ENCODE measurements at regions of chr2 and their contacts with region 1.

Region 1: DNA sequence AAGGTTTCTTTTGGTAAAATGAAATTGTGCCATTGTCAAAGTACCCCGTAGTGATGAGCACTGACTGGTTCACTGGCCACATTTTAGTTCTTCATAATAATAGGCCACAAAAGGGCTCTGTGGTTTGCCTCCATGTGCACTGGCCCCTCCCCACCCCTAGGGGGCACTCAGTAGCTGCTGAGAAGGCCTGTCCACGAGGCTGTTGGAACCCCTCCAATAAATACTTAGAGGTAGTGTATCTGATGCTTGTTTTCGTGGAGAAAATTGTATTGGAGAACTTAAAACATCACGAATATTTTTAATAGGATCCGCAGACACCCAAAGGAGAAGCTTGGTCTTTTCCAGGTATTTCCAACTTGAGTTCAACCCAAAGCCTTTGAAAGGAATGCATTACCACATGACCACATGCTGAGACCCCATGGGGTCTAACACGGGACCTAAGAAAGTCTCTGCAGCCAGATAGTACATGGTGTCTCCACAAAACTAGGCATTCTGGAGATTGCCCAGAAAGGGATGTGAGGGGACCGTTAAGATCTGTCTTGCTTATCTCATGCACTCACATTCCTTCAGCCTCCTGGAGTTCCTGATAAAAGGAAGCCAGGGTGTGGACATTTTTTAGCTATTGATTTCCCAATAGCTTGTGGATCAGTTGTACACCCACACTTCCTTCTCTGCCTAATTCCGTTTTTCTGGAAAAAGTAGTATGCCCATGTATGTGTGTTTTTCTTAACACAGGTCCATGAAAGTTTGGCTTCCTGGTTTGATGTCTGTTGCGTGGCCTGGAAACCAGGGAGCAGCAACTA is 28.5 kb upstream of the NOSTRIN start:
- DNase-seq: peak; percentile 76 to 88 (median 80)
- H3K4me3 ChIP-seq: no peak overlapping the region
- H3K27ac ChIP-seq: peak overlapping the region in 1 of 5 donors; percentile 37
- H3K4me1 ChIP-seq: peaks cover 0 to 6% of the 10 kb centered on the region in 2 donors
- H3K27me3 ChIP-seq: no peaks in the 10 kb centered on the region
- CTCF ChIP-seq: peak; percentile 86 to 93 (median 90)
- POLR2A ChIP-seq: no peak

Region 2: DNA sequence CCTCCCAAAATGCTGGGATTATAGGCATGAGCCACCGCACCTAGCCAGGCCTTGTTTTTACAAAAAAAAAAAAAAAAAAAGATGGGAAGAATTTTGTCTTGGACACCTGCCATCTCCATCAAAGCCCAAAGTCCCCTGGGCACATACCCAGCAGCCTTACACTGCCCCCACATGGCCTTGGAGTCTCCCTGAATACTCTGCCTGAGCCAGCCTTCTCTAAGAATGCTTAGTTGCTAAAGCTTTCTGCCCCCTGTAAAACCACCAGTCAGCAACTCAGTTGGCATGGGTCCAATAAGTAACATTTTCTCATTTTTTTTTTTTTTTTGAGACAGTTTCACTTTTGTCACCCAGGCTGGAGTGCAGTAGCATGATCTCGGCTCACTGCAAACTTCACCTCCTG is 75.7 kb after region 1 on chr2:
- intact Hi-C with region 1: loop called (anchors 10 kb)
- DNase-seq: peak; percentile 52 to 86 (median 83)
- H3K4me3 ChIP-seq: no peak overlapping the region
- H3K27ac ChIP-seq: peak overlapping the region in 1 of 5 donors; percentile 27
- H3K4me1 ChIP-seq: peaks cover 4 to 7% of the 10 kb centered on the region in 2 donors
- H3K27me3 ChIP-seq: no peaks in the 10 kb centered on the region
- CTCF ChIP-seq: peak in 5 of 6 experiments; percentile 27 to 48 (median 40)
- POLR2A ChIP-seq: no peak

Region 3: GRCh38 chr2:168920504-168921157 is 146.7 kb after region 1 on chr2:
- intact Hi-C with region 1: loop called (anchors 5 kb)
- DNase-seq: no peak
- H3K4me3 ChIP-seq: no peak overlapping the region
- H3K27ac ChIP-seq: no peak overlapping the region
- H3K4me1 ChIP-seq: no peaks in the 10 kb centered on the region
- H3K27me3 ChIP-seq: no peaks in the 10 kb centered on the region
- CTCF ChIP-seq: peak; percentile 60 to 76 (median 70)
- POLR2A ChIP-seq: no peak